ENCODE measurements at regions of chr10 and their contacts with region 1.

Region 1: GRCh38 chr10:45249978-45250693 is 65.3 kb downstream of the OR13A1 start:
- DNase-seq: peak in 3 of 14 experiments; percentile 65 to 69 (median 69)
- ATAC-seq: peak; percentile 37
- H3K4me3 ChIP-seq: no peak overlapping the region
- H3K4me3 Mint-ChIP-seq: peak overlapping the region; percentile 21
- H3K27ac ChIP-seq: no peak overlapping the region
- H3K27ac Mint-ChIP-seq: no peak overlapping the region
- H3K4me1 ChIP-seq: peaks cover 3% of the 10 kb centered on the region
- H3K4me1 Mint-ChIP-seq: peaks cover 5% of the 10 kb centered on the region
- H3K27me3 ChIP-seq: no peaks in the 10 kb centered on the region
- H3K27me3 Mint-ChIP-seq: peaks cover 4% of the 10 kb centered on the region
- CTCF ChIP-seq: peak; percentile 72

Region 2: DNA sequence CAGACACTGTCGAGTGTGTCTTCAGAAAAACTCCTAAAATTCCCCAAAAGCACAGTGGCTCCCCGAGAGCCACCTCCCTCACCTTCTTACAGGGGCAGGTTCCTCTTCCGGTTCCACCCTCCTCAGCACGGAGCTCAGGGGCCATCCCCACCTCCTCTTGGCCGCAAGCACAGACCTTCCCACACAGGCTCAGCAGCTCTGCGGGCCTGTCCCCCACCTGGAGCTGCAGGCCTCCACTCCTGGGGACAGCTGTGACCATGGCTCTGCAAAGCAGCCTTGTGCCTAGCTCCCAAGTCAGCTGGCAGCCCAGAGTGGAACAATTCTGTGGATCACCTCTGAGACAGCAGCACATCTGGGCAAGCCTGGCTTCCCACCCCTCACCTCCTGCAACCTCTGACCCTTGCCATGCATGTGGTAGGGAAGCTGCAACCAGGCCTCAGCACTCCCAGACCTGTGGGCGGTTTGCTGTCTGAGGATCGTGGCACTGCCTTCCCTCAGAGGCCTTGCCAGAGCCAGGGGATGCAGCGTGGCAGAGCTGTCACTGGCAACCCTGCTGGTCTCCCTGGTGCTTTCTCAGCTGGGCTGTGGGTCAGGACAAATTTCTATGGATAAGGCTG is 203.6 kb after region 1 on chr10:
- CTCF ChIA-PET with region 1: no interaction called
- POLR2A ChIA-PET with region 1: no interaction called
- intact Hi-C with region 1: loop called in 1 of 2 experiments (anchors 10 kb)
- DNase-seq: no peak
- ATAC-seq: no peak
- H3K4me3 ChIP-seq: no peak overlapping the region
- H3K4me3 Mint-ChIP-seq: no peak overlapping the region
- H3K27ac ChIP-seq: no peak overlapping the region
- H3K27ac Mint-ChIP-seq: no peak overlapping the region
- H3K4me1 ChIP-seq: peaks cover 8% of the 10 kb centered on the region
- H3K4me1 Mint-ChIP-seq: no peaks in the 10 kb centered on the region
- H3K27me3 ChIP-seq: no peaks in the 10 kb centered on the region
- H3K27me3 Mint-ChIP-seq: no peaks in the 10 kb centered on the region
- CTCF ChIP-seq: no peak

Measured in CD4-positive, alpha-beta T cell (primary cell).